Gastrocnemius medialis (tissue), 4 donors: ENCODE measurements at regions of chr15 and their contacts with region 1.

Region 1: DNA sequence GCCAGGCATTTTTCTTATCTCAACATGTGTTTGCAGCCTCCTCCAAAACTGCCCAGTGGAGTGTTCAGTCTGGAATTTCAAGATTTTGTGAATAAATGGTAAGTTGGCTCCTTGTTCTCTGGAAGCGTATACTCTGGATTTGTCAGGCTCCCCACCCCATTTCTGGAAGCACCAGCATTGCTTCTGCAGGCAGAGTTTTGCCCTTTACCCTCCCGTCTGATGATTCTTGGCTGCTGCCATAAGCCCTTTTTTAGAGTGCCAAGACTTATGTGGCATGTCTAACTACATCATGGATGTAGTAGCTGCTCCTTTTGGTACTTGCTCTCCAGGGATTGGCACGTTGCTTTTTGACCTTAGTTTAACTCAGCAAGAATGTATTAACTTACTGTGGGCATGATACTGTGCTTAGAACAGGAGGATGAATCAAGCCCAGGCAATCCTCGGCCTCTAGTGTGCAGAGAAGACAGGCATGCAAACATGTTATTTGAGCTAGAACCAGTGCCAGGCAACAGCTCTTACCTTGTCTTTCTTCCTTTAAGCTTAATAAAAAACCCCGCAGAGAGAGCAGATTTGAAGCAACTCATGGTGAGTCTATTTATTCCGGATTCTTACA is 8.3 kb downstream of the SNAPC5 start:
- DNase-seq: no peak
- ATAC-seq: peak in 1 of 2 donors; percentile 54
- H3K4me3 ChIP-seq: no peak overlapping the region
- H3K27ac ChIP-seq: no peak overlapping the region
- H3K4me1 ChIP-seq: peaks cover 4 to 17% of the 10 kb centered on the region in 2 donors
- H3K27me3 ChIP-seq: no peaks in the 10 kb centered on the region
- CTCF ChIP-seq: no peak
- POLR2A ChIP-seq: no peak

Region 2: DNA sequence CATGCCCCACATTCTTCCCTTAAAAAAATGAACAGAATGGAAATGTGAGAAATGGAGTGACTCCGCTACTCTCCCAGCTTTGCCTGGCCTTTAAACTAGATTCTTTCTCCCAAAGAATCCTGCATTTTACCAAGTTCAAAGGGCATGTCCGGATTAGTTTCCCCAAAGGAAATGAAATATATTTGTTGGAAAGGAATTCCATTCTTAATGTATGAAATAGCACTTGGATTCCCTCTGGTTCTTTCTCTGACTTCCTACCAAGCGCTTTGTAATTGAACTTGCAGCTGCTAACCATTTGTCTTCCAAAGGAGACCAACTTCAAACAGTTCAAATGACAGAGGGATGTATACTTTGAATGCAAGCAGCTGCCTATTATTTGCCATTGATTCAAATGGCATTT is 83.7 kb before region 1 on chr15:
- in situ Hi-C with region 1: no loop called
- intact Hi-C with region 1: loop called (anchors 5 kb)
- DNase-seq: no peak
- ATAC-seq: no peak
- H3K4me3 ChIP-seq: peak overlapping the region in 1 of 4 donors; percentile 39
- H3K27ac ChIP-seq: peak overlapping the region in 3 of 4 donors; percentile 27 to 56 (median 32)
- H3K4me1 ChIP-seq: peaks cover 46 to 61% of the 10 kb centered on the region in 2 donors
- H3K27me3 ChIP-seq: no peaks in the 10 kb centered on the region
- CTCF ChIP-seq: no peak
- POLR2A ChIP-seq: no peak

Region 3: DNA sequence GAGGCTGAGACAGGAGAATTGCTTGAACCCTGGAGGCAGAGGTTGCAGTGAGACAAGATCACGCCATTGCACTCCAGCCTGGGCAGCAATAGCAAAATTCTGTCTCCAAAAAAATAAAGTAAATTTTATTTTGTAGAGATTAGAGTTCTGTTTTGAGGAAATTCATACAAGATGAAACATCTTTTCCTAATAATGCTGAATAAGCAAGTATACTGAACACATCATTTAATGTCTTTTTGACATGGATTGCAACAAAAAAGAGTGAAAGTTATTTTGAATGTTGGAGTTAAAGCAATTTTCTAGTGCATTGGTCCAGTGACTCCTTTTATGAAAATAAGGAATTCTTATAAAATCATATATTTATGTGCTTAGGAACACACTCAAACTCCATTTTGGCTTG is 56.0 kb after region 1 on chr15:
- in situ Hi-C with region 1: no loop called
- intact Hi-C with region 1: no loop called
- DNase-seq: no peak
- ATAC-seq: no peak
- H3K4me3 ChIP-seq: no peak overlapping the region
- H3K27ac ChIP-seq: no peak overlapping the region
- H3K4me1 ChIP-seq: no peaks in the 10 kb centered on the region
- H3K27me3 ChIP-seq: no peaks in the 10 kb centered on the region
- CTCF ChIP-seq: no peak
- POLR2A ChIP-seq: no peak